Heart left ventricle (tissue), 16 donors: ENCODE measurements at regions of chr5 and their contacts with region 1.

Region 1: GRCh38 chr5:52915176-52915875 is 73.8 kb upstream of the ITGA2 start:
- DNase-seq: peak in 4 of 5 donors; percentile 30 to 59 (median 46)
- ATAC-seq: peak; percentile 73 to 96 (median 90)
- H3K4me3 ChIP-seq: peak overlapping the region in 7 of 12 donors; percentile 8 to 36 (median 30)
- H3K27ac ChIP-seq: peak overlapping the region in 7 of 12 donors; percentile 3 to 59 (median 26)
- H3K4me1 ChIP-seq: peaks cover 0 to 22% (median 8%) of the 10 kb centered on the region in 12 donors
- H3K27me3 ChIP-seq: no peaks in the 10 kb centered on the region
- CTCF ChIP-seq: peak; percentile 70 to 89 (median 76)
- POLR2A ChIP-seq: no peak

Region 2: GRCh38 chr5:52665559-52665958 is 249.8 kb before region 1 on chr5:
- intact Hi-C with region 1: loop called in 5 of 10 experiments (anchors 5 to 10 kb)
- DNase-seq: peak in 4 of 5 donors; percentile 30 to 62 (median 48)
- ATAC-seq: peak in 3 of 4 donors; percentile 52 to 83 (median 76)
- H3K4me3 ChIP-seq: peak overlapping the region in 3 of 12 donors; percentile 9 to 26 (median 25)
- H3K27ac ChIP-seq: peak overlapping the region in 10 of 12 donors; percentile 15 to 59 (median 41)
- H3K4me1 ChIP-seq: peaks cover 0 to 22% (median 6%) of the 10 kb centered on the region in 12 donors
- H3K27me3 ChIP-seq: no peaks in the 10 kb centered on the region
- CTCF ChIP-seq: no peak
- POLR2A ChIP-seq: no peak

Region 3: GRCh38 chr5:52693280-52693679 is 222.0 kb before region 1 on chr5:
- intact Hi-C with region 1: loop called (anchors 1 to 10 kb)
- DNase-seq: peak; percentile 40 to 46 (median 43)
- ATAC-seq: peak; percentile 54 to 81 (median 64)
- H3K4me3 ChIP-seq: no peak overlapping the region
- H3K27ac ChIP-seq: peak overlapping the region in 5 of 12 donors; percentile 35 to 56 (median 47)
- H3K4me1 ChIP-seq: peaks cover 0 to 46% (median 15%) of the 10 kb centered on the region in 12 donors
- H3K27me3 ChIP-seq: no peaks in the 10 kb centered on the region
- CTCF ChIP-seq: peak; percentile 55 to 85 (median 67)
- POLR2A ChIP-seq: no peak

Region 4: DNA sequence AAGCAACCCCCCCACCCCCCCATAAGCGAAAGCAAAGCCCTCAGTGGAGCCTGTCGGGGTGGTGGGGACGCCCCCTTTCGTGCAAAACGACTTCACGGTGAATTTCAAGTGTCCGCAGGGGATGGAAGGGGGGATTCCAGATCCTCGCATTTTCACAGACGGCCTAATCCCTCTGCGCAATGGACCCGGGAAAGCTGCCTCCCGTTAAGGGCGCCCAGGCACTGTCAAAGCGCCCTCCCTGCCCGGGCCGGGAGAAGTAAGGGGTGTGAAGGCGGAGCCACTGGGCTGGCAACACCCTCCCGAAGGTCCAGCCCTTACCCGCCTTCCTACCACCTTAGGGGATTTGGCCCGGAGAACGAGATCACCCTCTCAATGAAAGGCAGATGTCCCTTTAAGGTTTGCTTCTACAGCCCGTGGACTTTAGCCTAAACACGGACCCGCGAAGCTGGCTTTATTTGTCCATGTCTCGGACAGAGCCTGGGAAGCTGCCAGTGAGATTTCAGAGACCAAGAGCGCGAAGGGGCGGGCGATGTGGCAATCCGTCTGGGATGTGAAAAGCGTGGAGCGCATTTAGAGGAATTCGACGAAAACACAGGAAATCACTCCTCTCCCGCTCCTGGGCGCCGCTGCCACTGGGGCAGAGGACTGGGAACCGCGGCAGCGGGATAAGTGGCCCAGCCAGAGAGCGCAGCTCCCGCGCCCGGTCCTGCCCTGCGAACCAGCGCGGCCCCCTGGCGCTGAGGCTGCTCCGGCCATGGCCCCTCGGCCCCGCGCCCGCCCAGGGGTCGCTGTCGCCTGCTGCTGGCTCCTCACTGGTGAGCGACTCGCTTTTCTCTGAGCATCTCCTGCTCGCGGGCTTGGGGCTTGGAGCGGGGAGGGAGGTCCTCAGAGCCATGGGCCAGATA is 127.5 kb before region 1 on chr5 and contains the starts of genes ITGA1 and PELO:
- intact Hi-C with region 1: loop called in 9 of 10 experiments (anchors 1 to 5 kb)
- DNase-seq: peak; percentile 75 to 86 (median 79)
- ATAC-seq: peak; percentile 88 to 95 (median 92)
- H3K4me3 ChIP-seq: peak within 1 kb of the TSS; percentile 45 to 83 (median 72)
- H3K27ac ChIP-seq: peak within 1 kb of the TSS; percentile 82 to 96 (median 90)
- H3K4me1 ChIP-seq: peaks cover 0 to 42% (median 14%) of the 10 kb centered on the region in 12 donors
- H3K27me3 ChIP-seq: no peaks in the 10 kb centered on the region
- CTCF ChIP-seq: peak; percentile 16 to 71 (median 54)
- POLR2A ChIP-seq: peak in 1 of 2 donors; percentile 55
- total RNA-seq, gene ITGA1: 20.9 to 52.0 (median 24.6) TPM
- total RNA-seq, gene PELO: 12.8 to 28.4 (median 20.1) TPM

Region 5: DNA sequence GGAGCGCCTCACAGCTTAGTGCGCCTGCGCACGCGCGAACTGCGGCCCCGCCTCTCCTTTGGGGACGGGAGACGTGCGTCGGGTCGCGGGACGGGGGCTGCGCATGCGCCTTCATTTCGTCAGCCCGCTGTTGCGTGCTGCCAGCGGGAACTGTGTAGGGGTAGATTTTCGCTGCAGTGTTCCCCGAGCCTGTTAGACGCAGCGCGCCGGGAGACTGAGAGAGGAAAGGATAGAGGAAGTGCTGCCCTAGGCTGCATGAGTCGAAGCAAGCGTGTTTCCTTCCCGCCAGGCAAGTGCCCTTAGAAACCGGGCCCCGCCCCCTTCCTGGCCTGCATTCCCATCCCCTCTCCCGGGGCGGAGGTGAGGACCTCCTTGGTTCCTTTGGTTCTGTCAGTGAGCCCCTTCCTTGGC is 115.3 kb before region 1 on chr5:
- intact Hi-C with region 1: loop called in 2 of 10 experiments (anchors 5 kb)
- DNase-seq: peak; percentile 95 to 99 (median 96)
- ATAC-seq: peak; percentile 92 to 97 (median 94)
- H3K4me3 ChIP-seq: peak overlapping the region; percentile 49 to 80 (median 67)
- H3K27ac ChIP-seq: peak overlapping the region; percentile 67 to 96 (median 91)
- H3K4me1 ChIP-seq: peaks cover 9 to 93% (median 63%) of the 10 kb centered on the region in 12 donors
- H3K27me3 ChIP-seq: no peaks in the 10 kb centered on the region
- CTCF ChIP-seq: no peak
- POLR2A ChIP-seq: peak in 1 of 2 donors; percentile 66

Region 6: GRCh38 chr5:52864371-52864770 is 51.0 kb before region 1 on chr5:
- intact Hi-C with region 1: loop called in 1 of 10 experiments (anchors 10 kb)
- DNase-seq: no peak
- ATAC-seq: peak in 1 of 4 donors; percentile 58
- H3K4me3 ChIP-seq: no peak overlapping the region
- H3K27ac ChIP-seq: peak overlapping the region in 9 of 12 donors; percentile 9 to 70 (median 47)
- H3K4me1 ChIP-seq: peaks cover 0 to 32% (median 19%) of the 10 kb centered on the region in 12 donors
- H3K27me3 ChIP-seq: no peaks in the 10 kb centered on the region
- CTCF ChIP-seq: no peak
- POLR2A ChIP-seq: no peak